ENCODE measurements at regions of chr14 and their contacts with region 1.

Region 1: GRCh38 chr14:65478596-65478995 is 66.1 kb downstream of the FUT8 start:
- DNase-seq: no peak
- ATAC-seq: peak; percentile 38
- H3K4me3 Mint-ChIP-seq: no peak overlapping the region
- H3K27ac Mint-ChIP-seq: no peak overlapping the region
- H3K4me1 Mint-ChIP-seq: peaks cover 80% of the 10 kb centered on the region
- H3K27me3 Mint-ChIP-seq: no peaks in the 10 kb centered on the region
- CTCF ChIP-seq: no peak

Region 2: GRCh38 chr14:65513671-65514070 is 35.1 kb after region 1 on chr14:
- CTCF ChIA-PET with region 1: no interaction called
- POLR2A ChIA-PET with region 1: no interaction called
- intact Hi-C with region 1: loop called (anchors 5 kb)
- DNase-seq: no peak
- ATAC-seq: no peak
- H3K4me3 Mint-ChIP-seq: no peak overlapping the region
- H3K27ac Mint-ChIP-seq: no peak overlapping the region
- H3K4me1 Mint-ChIP-seq: peaks cover 57% of the 10 kb centered on the region
- H3K27me3 Mint-ChIP-seq: no peaks in the 10 kb centered on the region
- CTCF ChIP-seq: no peak

Measured in activated B cell treated with CpG ODN at 0.5 μM for 24 hours (primary cell).